ENCODE measurements at regions of chr12 and their contacts with region 1.

Region 1: DNA sequence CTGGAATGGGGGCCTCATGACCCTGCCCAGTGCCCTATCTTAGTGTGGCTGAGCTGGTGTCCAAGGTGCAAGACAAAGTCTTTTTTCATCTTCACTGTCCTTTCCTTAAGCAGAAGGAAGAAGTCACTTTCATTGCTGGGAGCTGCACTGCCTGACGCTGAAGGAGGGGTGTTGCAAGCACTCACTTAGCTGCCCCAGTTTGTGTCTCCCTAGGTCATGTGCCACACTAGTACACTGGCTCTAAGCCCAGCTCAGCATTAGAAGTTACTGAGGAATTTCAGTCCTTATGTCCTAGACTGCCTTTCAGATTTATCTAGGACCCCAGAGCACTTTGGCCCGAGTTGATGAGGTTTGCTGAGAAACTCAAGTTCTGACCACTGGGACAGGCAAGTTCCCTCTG is 952.0 kb upstream of the USP15 start:
- DNase-seq: no peak
- ATAC-seq: no peak
- H3K4me3 ChIP-seq: no peak overlapping the region
- H3K27ac ChIP-seq: no peak overlapping the region
- H3K4me1 ChIP-seq: no peaks in the 10 kb centered on the region
- H3K27me3 ChIP-seq: no peaks in the 10 kb centered on the region
- CTCF ChIP-seq: no peak

Region 2: GRCh38 chr12:61282790-61283575 is 25.2 kb before region 1 on chr12:
- CTCF ChIA-PET with region 1: no interaction called
- POLR2A ChIA-PET with region 1: no interaction called
- in situ Hi-C with region 1: no loop called
- intact Hi-C with region 1: no loop called
- DNase-seq: no peak
- ATAC-seq: no peak
- H3K4me3 ChIP-seq: no peak overlapping the region
- H3K27ac ChIP-seq: no peak overlapping the region
- H3K4me1 ChIP-seq: no peaks in the 10 kb centered on the region
- H3K27me3 ChIP-seq: no peaks in the 10 kb centered on the region
- CTCF ChIP-seq: no peak

Region 3: GRCh38 chr12:62044450-62045135 is 736.4 kb after region 1 on chr12:
- CTCF ChIA-PET with region 1: no interaction called
- POLR2A ChIA-PET with region 1: interaction called, 18 read pairs
- in situ Hi-C with region 1: no loop called
- intact Hi-C with region 1: no loop called
- DNase-seq: no peak
- ATAC-seq: no peak
- H3K4me3 ChIP-seq: no peak overlapping the region
- H3K27ac ChIP-seq: no peak overlapping the region
- H3K4me1 ChIP-seq: no peaks in the 10 kb centered on the region
- H3K27me3 ChIP-seq: no peaks in the 10 kb centered on the region
- CTCF ChIP-seq: no peak